MCF 10A (cell line): ENCODE measurements at regions of chrX and their contacts with region 1.

Region 1: GRCh38 chrX:100413229-100413628 is 3.2 kb upstream of the PCDH19 start:
- DNase-seq: peak; percentile 77
- H3K4me3 Mint-ChIP-seq: no peak overlapping the region
- H3K27ac Mint-ChIP-seq: no peak overlapping the region
- H3K4me1 Mint-ChIP-seq: no peaks in the 10 kb centered on the region
- H3K27me3 Mint-ChIP-seq: peaks cover 69% of the 10 kb centered on the region
- CTCF ChIP-seq: peak; percentile 66

Region 2: GRCh38 chrX:99301990-99302389 is 1111.2 kb before region 1 on chrX:
- CTCF ChIA-PET with region 1: interaction called, 21 read pairs
- POLR2A ChIA-PET with region 1: no interaction called
- intact Hi-C with region 1: loop called (anchors 1 kb)
- DNase-seq: peak; percentile 53
- H3K4me3 Mint-ChIP-seq: no peak overlapping the region
- H3K27ac Mint-ChIP-seq: no peak overlapping the region
- H3K4me1 Mint-ChIP-seq: no peaks in the 10 kb centered on the region
- H3K27me3 Mint-ChIP-seq: peaks cover 30% of the 10 kb centered on the region
- CTCF ChIP-seq: peak; percentile 46

Region 3: GRCh38 chrX:99572711-99573110 is 840.5 kb before region 1 on chrX:
- CTCF ChIA-PET with region 1: no interaction called
- POLR2A ChIA-PET with region 1: no interaction called
- intact Hi-C with region 1: no loop called
- DNase-seq: peak; percentile 1
- H3K4me3 Mint-ChIP-seq: no peak overlapping the region
- H3K27ac Mint-ChIP-seq: no peak overlapping the region
- H3K4me1 Mint-ChIP-seq: no peaks in the 10 kb centered on the region
- H3K27me3 Mint-ChIP-seq: no peaks in the 10 kb centered on the region
- CTCF ChIP-seq: no peak

Region 4: GRCh38 chrX:100072336-100072735 is 340.9 kb before region 1 on chrX:
- CTCF ChIA-PET with region 1: interaction called, 10 read pairs
- POLR2A ChIA-PET with region 1: no interaction called
- intact Hi-C with region 1: loop called (anchors 2 kb)
- DNase-seq: peak; percentile 26
- H3K4me3 Mint-ChIP-seq: no peak overlapping the region
- H3K27ac Mint-ChIP-seq: no peak overlapping the region
- H3K4me1 Mint-ChIP-seq: no peaks in the 10 kb centered on the region
- H3K27me3 Mint-ChIP-seq: peaks cover 11% of the 10 kb centered on the region
- CTCF ChIP-seq: peak; percentile 15

Region 5: DNA sequence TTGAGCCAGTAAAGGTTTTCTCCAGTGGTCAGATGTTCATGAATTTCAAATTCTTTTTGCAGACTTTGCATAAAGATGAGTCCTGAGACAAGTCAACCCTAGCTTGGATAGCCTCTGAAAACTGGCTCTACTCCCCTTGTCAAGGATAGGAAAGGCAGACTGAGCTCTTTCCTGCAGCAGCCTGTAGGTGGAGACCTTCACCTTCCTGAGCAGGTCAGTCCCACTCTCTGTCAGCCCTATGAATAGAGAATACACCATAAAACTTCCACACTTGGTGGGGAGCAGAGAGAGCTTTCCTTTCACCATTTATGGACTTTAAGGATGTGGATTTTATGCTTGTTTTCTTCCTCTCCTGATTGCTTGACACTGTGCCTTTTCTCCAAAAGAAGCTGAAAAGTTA is 45.1 kb before region 1 on chrX:
- CTCF ChIA-PET with region 1: interaction called, 28 read pairs
- POLR2A ChIA-PET with region 1: interaction called, 8 read pairs
- intact Hi-C with region 1: loop called (anchors 2 kb)
- DNase-seq: peak; percentile 53
- H3K4me3 Mint-ChIP-seq: no peak overlapping the region
- H3K27ac Mint-ChIP-seq: no peak overlapping the region
- H3K4me1 Mint-ChIP-seq: no peaks in the 10 kb centered on the region
- H3K27me3 Mint-ChIP-seq: peaks cover 59% of the 10 kb centered on the region
- CTCF ChIP-seq: peak; percentile 60

Region 6: GRCh38 chrX:100379388-100379986 is 33.7 kb before region 1 on chrX:
- CTCF ChIA-PET with region 1: interaction called, 29 read pairs
- POLR2A ChIA-PET with region 1: interaction called, 3 read pairs
- intact Hi-C with region 1: no loop called
- DNase-seq: peak; percentile 62
- H3K4me3 Mint-ChIP-seq: no peak overlapping the region
- H3K27ac Mint-ChIP-seq: peak overlapping the region; percentile 3
- H3K4me1 Mint-ChIP-seq: peaks cover 19% of the 10 kb centered on the region
- H3K27me3 Mint-ChIP-seq: peaks cover 45% of the 10 kb centered on the region
- CTCF ChIP-seq: peak; percentile 56

Region 7: DNA sequence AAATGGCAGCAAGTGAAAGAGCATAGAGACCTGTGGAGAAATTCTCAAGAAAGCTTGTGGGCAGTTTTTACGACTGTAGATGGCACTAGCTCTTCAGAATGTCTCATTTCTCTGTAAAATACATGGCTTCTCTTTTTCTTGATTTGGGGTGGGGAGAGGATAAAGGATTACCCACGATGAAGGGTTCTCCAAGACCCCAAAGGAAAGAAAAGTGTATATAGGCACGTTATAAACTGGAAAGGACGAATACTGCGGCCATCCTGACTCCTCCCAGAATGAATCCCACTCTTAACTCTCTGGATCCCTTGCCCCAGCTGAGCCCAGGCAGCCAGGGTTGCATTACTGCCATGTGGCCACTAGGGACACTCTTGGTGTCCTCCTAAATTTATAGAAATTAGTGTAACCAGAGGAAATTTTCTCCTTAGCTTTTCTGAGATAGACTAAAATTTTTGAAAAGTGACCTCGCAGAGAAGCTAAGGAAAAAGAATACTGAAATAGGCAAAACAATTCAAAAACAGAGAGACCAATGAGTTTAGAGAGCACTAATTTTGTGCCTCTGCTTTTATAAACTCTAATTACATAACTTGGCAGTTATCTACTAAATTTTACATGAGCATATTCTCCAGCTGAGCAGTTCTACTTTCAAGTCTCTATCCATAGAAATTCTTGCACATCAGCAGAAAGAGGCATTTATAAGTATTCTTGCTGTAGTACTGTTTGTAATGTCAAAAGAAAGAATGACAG is 34.6 kb after region 1 on chrX:
- CTCF ChIA-PET with region 1: interaction called, 10 read pairs
- POLR2A ChIA-PET with region 1: interaction called, 3 read pairs
- intact Hi-C with region 1: no loop called
- DNase-seq: peak; percentile 54
- H3K4me3 Mint-ChIP-seq: peak overlapping the region; percentile 17
- H3K27ac Mint-ChIP-seq: no peak overlapping the region
- H3K4me1 Mint-ChIP-seq: peaks cover 6% of the 10 kb centered on the region
- H3K27me3 Mint-ChIP-seq: peaks cover 35% of the 10 kb centered on the region
- CTCF ChIP-seq: peak; percentile 58

Region 8: GRCh38 chrX:100596601-100597000 is 183.4 kb after region 1 on chrX:
- CTCF ChIA-PET with region 1: no interaction called
- POLR2A ChIA-PET with region 1: no interaction called
- intact Hi-C with region 1: no loop called
- DNase-seq: no peak
- H3K4me3 Mint-ChIP-seq: no peak overlapping the region
- H3K27ac Mint-ChIP-seq: no peak overlapping the region
- H3K4me1 Mint-ChIP-seq: no peaks in the 10 kb centered on the region
- H3K27me3 Mint-ChIP-seq: peaks cover 84% of the 10 kb centered on the region
- CTCF ChIP-seq: no peak

Region 9: DNA sequence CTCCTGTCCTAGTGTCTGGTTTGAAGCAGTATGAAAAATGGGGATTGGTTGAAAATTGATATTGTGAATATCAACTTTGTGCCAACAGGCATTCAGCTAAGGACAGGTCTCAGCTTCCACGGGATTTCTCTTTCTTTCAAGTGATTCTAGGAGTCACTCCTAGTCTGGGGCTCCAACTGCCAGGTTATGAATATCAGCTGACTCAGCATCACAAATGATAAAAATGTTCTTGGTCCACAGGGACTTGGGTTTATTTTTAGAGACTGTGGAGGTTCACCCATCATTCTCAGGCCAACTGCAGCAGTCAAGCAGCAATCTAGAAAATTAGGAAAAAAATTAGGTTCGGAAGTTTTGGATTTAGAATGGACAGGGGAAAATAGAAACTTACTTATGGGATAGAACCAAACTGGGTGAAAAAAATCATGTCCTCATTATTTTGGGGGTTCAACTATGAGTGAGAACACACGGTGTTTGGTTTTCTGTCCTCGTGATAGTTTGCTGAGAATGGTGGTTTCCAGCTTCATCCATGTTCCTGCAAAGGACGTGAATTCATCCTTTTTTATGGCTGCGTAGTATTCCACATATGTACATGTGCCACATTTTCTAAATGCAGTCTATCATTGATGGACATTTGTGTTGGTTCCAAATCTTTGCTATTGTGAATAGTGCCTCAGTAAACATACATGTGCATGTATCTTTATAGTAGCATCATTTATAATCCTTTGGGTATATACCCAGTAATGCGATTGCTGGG is 1772.9 kb after region 1 on chrX:
- CTCF ChIA-PET with region 1: no interaction called
- POLR2A ChIA-PET with region 1: no interaction called
- intact Hi-C with region 1: no loop called
- DNase-seq: no peak
- H3K4me3 Mint-ChIP-seq: no peak overlapping the region
- H3K27ac Mint-ChIP-seq: no peak overlapping the region
- H3K4me1 Mint-ChIP-seq: no peaks in the 10 kb centered on the region
- H3K27me3 Mint-ChIP-seq: peaks cover 30% of the 10 kb centered on the region
- CTCF ChIP-seq: no peak